ENCODE measurements at regions of chr14 and their contacts with region 1.

Region 1: GRCh38 chr14:106556665-106557289 is 1030.4 kb downstream of the TMEM121 start:
- DNase-seq: peak; percentile 76
- ATAC-seq: peak; percentile 68
- H3K4me3 Mint-ChIP-seq: no peak overlapping the region
- H3K27ac Mint-ChIP-seq: no peak overlapping the region
- H3K4me1 Mint-ChIP-seq: peaks cover 6% of the 10 kb centered on the region
- H3K27me3 Mint-ChIP-seq: peaks cover 8% of the 10 kb centered on the region
- CTCF ChIP-seq: peak; percentile 69

Region 2: GRCh38 chr14:106586098-106586704 is 29.4 kb after region 1 on chr14:
- CTCF ChIA-PET with region 1: interaction called, 4 read pairs
- POLR2A ChIA-PET with region 1: no interaction called
- intact Hi-C with region 1: loop called (anchors 2 kb)
- DNase-seq: peak; percentile 60
- ATAC-seq: peak; percentile 95
- H3K4me3 Mint-ChIP-seq: no peak overlapping the region
- H3K27ac Mint-ChIP-seq: no peak overlapping the region
- H3K4me1 Mint-ChIP-seq: peaks cover 36% of the 10 kb centered on the region
- H3K27me3 Mint-ChIP-seq: no peaks in the 10 kb centered on the region
- CTCF ChIP-seq: no peak

Measured in activated B cell treated with CpG ODN at 0.5 μM for 24 hours (primary cell).